PC-9 (cell line): ENCODE measurements at regions of chr20 and their contacts with region 1.

Region 1: DNA sequence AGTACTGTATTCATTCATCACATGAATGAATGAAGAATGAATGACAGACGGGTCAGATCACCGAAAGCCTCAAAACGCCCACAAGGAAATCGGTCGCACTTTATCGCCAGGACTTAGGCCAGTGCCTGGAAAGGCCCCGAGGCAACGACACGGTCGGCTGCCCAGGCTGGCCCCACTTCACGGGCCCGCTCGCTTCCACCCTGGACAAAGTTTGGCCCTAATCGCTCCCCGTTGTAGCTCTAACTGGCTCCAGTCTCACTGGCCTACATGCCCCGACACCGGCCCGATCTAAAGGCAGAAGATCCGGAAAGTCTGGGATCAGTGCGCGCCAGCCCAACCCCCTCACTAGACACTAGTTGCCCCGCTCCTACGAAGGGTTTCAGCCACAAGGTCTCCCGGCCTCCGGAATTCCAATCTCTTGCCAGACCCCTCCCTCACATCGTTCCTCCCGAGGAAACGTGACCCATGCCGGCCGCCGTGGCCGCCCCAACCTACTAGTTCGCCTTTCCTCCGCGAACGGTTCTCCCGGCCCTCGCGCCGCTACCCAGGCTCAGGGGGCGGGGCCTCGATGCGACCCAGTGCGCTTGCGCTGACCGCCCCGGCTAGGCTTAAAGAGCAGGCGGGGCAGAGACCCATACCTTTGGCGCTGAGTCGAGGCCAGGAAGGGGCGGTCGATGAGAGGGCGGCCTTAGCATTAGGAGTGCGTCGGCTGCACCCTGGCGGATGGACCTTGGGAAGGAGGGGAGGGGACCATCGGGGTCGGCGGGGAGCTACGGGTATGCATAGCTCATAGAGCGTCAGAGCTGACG is at the starts of genes GSS and MYH7B:
- DNase-seq: peak; percentile 89 to 99
- H3K4me3 ChIP-seq: peak within 1 kb of the TSS; percentile 69
- H3K27ac ChIP-seq: peak within 1 kb of the TSS; percentile 87
- H3K4me1 ChIP-seq: peaks cover 40% of the 10 kb centered on the region
- H3K27me3 ChIP-seq: no peaks in the 10 kb centered on the region
- CTCF ChIP-seq: peak; percentile 61
- total RNA-seq, gene GSS: 131 and 138 TPM in 2 replicates
- total RNA-seq, gene MYH7B: 1.0 and 2.3 TPM in 2 replicates

Region 2: DNA sequence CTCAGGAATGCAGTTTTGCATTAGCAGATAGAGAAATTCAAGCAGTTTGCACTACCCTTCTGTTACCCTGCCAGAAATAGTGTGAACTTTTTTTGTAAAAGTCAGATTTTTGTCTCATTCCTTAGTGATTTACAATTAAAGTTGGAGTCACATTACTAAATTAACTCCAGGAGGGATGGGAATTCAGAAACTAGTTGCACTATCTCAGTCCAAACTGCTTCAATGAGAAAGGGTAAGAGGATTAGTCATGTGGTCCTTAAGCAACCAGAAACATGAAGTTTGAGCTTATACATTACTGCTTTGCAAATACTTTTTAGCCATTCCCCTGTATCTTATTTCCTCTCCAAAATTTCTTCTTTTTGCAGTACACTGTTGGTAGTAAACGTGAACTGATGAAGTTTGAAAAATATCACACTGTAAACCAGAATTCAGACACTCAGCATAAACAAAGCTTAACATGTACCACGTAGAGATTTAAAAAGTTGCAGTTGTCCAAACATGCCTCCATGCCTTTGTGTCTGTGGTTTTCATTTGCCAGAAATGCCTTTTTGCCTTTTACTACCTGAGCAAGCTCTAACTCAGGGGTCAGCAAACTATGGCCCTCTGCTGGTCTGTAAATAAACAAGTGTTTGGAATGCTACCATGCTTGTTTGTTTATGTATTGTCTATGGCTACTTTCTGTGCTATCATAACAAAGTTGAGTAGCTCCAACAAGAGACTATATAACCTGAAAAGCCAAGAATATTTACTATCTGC is 201.6 kb before region 1 on chr20:
- CTCF ChIA-PET with region 1: no interaction called
- POLR2A ChIA-PET with region 1: interaction called, 17 read pairs
- intact Hi-C with region 1: no loop called
- DNase-seq: no peak
- H3K4me3 ChIP-seq: no peak overlapping the region
- H3K27ac ChIP-seq: no peak overlapping the region
- H3K4me1 ChIP-seq: no peaks in the 10 kb centered on the region
- H3K27me3 ChIP-seq: no peaks in the 10 kb centered on the region
- CTCF ChIP-seq: no peak